ENCODE measurements at regions of chr5 and their contacts with region 1.

Region 1: DNA sequence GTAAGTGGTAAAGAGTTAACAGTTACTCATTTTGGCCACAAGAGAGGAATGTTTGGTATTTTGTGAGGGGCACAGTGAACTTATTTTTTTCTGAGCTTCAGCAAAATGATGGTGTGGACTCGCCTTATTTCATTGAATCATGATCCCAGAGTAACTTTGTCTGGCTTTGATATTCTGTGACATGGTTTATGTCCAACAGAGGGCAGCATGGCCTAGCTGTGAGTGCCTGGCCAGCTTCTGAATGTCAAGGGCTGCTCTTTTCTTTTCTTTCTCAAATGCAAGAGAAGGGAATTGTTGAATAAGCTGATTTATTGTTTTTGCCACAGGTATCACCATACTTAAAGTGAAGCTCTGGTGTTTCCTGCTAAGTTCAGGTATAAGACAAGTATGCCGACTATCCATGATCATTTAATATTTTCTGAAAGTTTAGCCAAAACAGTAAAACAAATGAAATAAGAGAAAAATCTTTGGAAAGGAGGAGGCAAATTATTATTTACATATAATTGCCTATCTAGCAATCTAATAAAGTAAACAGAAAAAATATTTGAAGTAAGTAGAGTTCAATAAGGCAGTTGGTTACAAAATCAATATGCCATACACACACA is 31.7 kb downstream of the MRPL22 start:
- DNase-seq: peak; percentile 66
- H3K4me3 Mint-ChIP-seq: no peak overlapping the region
- H3K27ac Mint-ChIP-seq: no peak overlapping the region
- H3K4me1 Mint-ChIP-seq: no peaks in the 10 kb centered on the region
- H3K27me3 Mint-ChIP-seq: no peaks in the 10 kb centered on the region
- CTCF ChIP-seq: peak; percentile 68

Region 2: GRCh38 chr5:154986151-154986550 is 13.6 kb after region 1 on chr5:
- CTCF ChIA-PET with region 1: interaction called, 21 read pairs
- POLR2A ChIA-PET with region 1: interaction called, 4 read pairs
- intact Hi-C with region 1: no loop called
- DNase-seq: no peak
- H3K4me3 Mint-ChIP-seq: no peak overlapping the region
- H3K27ac Mint-ChIP-seq: no peak overlapping the region
- H3K4me1 Mint-ChIP-seq: no peaks in the 10 kb centered on the region
- H3K27me3 Mint-ChIP-seq: no peaks in the 10 kb centered on the region
- CTCF ChIP-seq: no peak

Region 3: GRCh38 chr5:155004138-155004744 is 31.7 kb after region 1 on chr5:
- CTCF ChIA-PET with region 1: interaction called, 33 read pairs
- POLR2A ChIA-PET with region 1: no interaction called
- intact Hi-C with region 1: loop called (anchors 1 kb)
- DNase-seq: peak; percentile 61
- H3K4me3 Mint-ChIP-seq: no peak overlapping the region
- H3K27ac Mint-ChIP-seq: no peak overlapping the region
- H3K4me1 Mint-ChIP-seq: peaks cover 9% of the 10 kb centered on the region
- H3K27me3 Mint-ChIP-seq: no peaks in the 10 kb centered on the region
- CTCF ChIP-seq: peak; percentile 37

Region 4: DNA sequence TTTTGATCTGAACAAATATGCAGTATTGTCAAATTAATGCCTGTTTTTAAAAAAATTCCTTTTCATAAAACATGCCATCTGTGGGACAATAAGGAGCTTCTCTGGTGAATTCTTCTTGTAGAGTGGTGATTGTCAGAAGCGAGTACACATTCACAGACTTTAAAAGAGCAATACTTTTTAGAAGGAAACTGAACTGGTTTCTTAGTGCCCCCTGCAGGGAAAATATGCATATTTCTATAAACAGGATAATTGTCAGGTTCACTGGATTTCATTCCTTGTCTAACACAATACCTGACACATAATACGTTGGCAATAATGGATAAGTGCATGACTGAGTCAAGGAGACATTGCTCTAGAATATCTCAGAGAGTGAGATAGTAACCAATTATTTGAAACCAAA is 174.6 kb after region 1 on chr5:
- CTCF ChIA-PET with region 1: interaction called, 36 read pairs
- POLR2A ChIA-PET with region 1: no interaction called
- intact Hi-C with region 1: loop called (anchors 1 kb)
- DNase-seq: peak; percentile 39
- H3K4me3 Mint-ChIP-seq: no peak overlapping the region
- H3K27ac Mint-ChIP-seq: no peak overlapping the region
- H3K4me1 Mint-ChIP-seq: no peaks in the 10 kb centered on the region
- H3K27me3 Mint-ChIP-seq: no peaks in the 10 kb centered on the region
- CTCF ChIP-seq: peak; percentile 49

Region 5: DNA sequence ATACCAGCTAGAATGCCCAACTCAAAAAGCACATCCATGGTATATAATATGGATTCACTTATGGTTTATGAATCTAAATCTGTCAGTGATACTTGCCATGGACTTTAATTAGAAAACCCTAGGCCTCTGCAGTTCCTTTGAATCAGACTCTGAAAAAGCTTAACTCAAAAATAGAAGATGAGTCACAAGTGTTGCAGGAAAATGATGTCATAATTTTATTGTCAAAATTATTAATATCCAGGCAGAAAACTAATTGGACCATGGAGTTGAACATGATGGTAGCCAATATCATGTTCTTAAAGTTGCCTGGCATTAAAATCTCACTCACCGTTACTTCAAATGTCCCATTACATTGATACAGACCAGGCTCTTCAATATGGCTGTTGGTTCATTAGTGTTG is 1767.3 kb after region 1 on chr5:
- CTCF ChIA-PET with region 1: no interaction called
- POLR2A ChIA-PET with region 1: no interaction called
- intact Hi-C with region 1: no loop called
- DNase-seq: no peak
- H3K4me3 Mint-ChIP-seq: no peak overlapping the region
- H3K27ac Mint-ChIP-seq: no peak overlapping the region
- H3K4me1 Mint-ChIP-seq: peaks cover 5% of the 10 kb centered on the region
- H3K27me3 Mint-ChIP-seq: no peaks in the 10 kb centered on the region
- CTCF ChIP-seq: no peak

Region 6: GRCh38 chr5:156824800-156825199 is 1852.2 kb after region 1 on chr5:
- CTCF ChIA-PET with region 1: interaction called, 4 read pairs
- POLR2A ChIA-PET with region 1: no interaction called
- intact Hi-C with region 1: loop called (anchors 2 kb)
- DNase-seq: peak; percentile 8
- H3K4me3 Mint-ChIP-seq: no peak overlapping the region
- H3K27ac Mint-ChIP-seq: no peak overlapping the region
- H3K4me1 Mint-ChIP-seq: peaks cover 4% of the 10 kb centered on the region
- H3K27me3 Mint-ChIP-seq: no peaks in the 10 kb centered on the region
- CTCF ChIP-seq: peak; percentile 84

Measured in MCF 10A (cell line).